Upper lobe of right lung (tissue), 1 donor: ENCODE measurements at regions of chr7 and their contacts with region 1.

Region 1: GRCh38 chr7:35701287-35701900 is 6.5 kb upstream of the HERPUD2 start:
- DNase-seq: no peak
- ATAC-seq: no peak
- H3K4me3 ChIP-seq: no peak overlapping the region
- H3K27ac ChIP-seq: no peak overlapping the region
- H3K4me1 ChIP-seq: no peaks in the 10 kb centered on the region
- H3K27me3 ChIP-seq: no peaks in the 10 kb centered on the region
- CTCF ChIP-seq: no peak

Region 2: GRCh38 chr7:35758421-35758820 is 57.0 kb after region 1 on chr7:
- intact Hi-C with region 1: no loop called
- DNase-seq: no peak
- ATAC-seq: no peak
- H3K4me3 ChIP-seq: no peak overlapping the region
- H3K27ac ChIP-seq: no peak overlapping the region
- H3K4me1 ChIP-seq: peaks cover 18% of the 10 kb centered on the region
- H3K27me3 ChIP-seq: no peaks in the 10 kb centered on the region
- CTCF ChIP-seq: no peak

Region 3: GRCh38 chr7:35906191-35906908 is 205.0 kb after region 1 on chr7:
- intact Hi-C with region 1: loop called (anchors 10 kb)
- DNase-seq: no peak
- ATAC-seq: peak; percentile 98
- H3K4me3 ChIP-seq: no peak overlapping the region
- H3K27ac ChIP-seq: no peak overlapping the region
- H3K4me1 ChIP-seq: no peaks in the 10 kb centered on the region
- H3K27me3 ChIP-seq: no peaks in the 10 kb centered on the region
- CTCF ChIP-seq: peak; percentile 93